Heart left ventricle (tissue), 16 donors: ENCODE measurements at regions of chr2 and their contacts with region 1.

Region 1: GRCh38 chr2:239318790-239319661 is 81.8 kb downstream of the HDAC4 start:
- DNase-seq: peak in 2 of 5 donors; percentile 60 to 65
- ATAC-seq: peak in 3 of 4 donors; percentile 52 to 60 (median 57)
- H3K4me3 ChIP-seq: peak overlapping the region in 10 of 12 donors; percentile 6 to 54 (median 44)
- H3K27ac ChIP-seq: peak overlapping the region in 11 of 12 donors; percentile 45 to 90 (median 80)
- H3K4me1 ChIP-seq: peaks cover 5 to 68% (median 34%) of the 10 kb centered on the region in 12 donors
- H3K27me3 ChIP-seq: no peaks in the 10 kb centered on the region
- CTCF ChIP-seq: no peak
- POLR2A ChIP-seq: no peak

Region 2: GRCh38 chr2:239275044-239275685 is 43.9 kb before region 1 on chr2:
- intact Hi-C with region 1: no loop called
- DNase-seq: peak; percentile 64 to 90 (median 82)
- ATAC-seq: peak; percentile 49 to 87 (median 80)
- H3K4me3 ChIP-seq: peak overlapping the region in 9 of 12 donors; percentile 1 to 46 (median 8)
- H3K27ac ChIP-seq: peak overlapping the region in 11 of 12 donors; percentile 3 to 91 (median 74)
- H3K4me1 ChIP-seq: peaks cover 3 to 67% (median 50%) of the 10 kb centered on the region in 12 donors
- H3K27me3 ChIP-seq: no peaks in the 10 kb centered on the region
- CTCF ChIP-seq: no peak
- POLR2A ChIP-seq: peak in 1 of 2 donors; percentile 27

Region 3: DNA sequence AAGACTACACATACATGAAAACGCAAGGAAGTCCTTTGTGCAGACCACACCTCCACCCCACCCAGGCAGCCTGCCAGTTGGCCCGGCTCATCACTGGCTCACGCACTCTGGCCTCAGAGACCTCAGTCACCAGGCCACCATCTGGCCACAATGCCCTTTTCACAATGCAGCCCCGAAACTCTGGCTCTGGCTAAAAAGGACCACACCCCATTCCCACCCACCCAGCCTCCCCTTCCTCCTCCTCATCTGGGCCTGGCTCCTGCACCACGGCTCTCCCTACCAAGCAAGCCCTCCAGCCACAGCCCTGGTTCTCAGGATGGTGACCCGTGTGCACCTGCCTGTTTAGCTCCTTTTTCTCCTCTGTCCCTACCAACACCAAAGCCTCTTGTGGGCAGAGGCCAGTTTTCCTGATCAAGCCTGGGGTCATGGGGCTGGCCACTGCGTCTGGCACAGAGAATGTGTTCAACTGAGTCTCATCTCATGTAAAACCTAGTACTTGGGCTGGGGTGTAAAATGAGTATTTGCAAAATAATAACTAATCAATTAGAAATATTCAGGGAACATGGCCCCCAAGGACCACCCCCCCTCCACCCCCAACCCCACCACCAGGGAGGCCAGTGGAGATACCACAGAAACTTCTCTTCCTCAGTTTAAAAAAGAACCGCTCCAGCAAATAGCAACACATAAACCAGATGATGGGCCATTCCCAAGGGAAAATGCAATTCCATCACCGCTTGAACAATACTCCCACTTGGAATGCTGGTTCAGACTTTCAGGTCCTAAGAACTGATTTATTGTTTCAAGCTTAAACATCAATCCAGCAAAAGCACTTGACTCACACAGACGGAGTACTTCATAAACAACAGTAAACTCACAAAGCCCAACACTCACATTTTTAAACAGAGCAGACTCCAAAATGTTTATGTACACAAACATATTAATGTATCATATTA is 74.6 kb after region 1 on chr2:
- intact Hi-C with region 1: loop called in 7 of 10 experiments (anchors 5 to 10 kb)
- DNase-seq: peak; percentile 65 to 81 (median 74)
- ATAC-seq: peak in 3 of 4 donors; percentile 43 to 70 (median 45)
- H3K4me3 ChIP-seq: no peak overlapping the region
- H3K27ac ChIP-seq: peak overlapping the region in 2 of 12 donors; percentile 35 to 42
- H3K4me1 ChIP-seq: peaks cover 6 to 80% (median 37%) of the 10 kb centered on the region in 12 donors
- H3K27me3 ChIP-seq: no peaks in the 10 kb centered on the region
- CTCF ChIP-seq: no peak
- POLR2A ChIP-seq: no peak